ENCODE measurements at regions of chr3 and their contacts with region 1.

Region 1: GRCh38 chr3:101391413-101391950 is 71.1 kb upstream of the IMPG2 start:
- DNase-seq: no peak
- H3K4me3 Mint-ChIP-seq: no peak overlapping the region
- H3K27ac Mint-ChIP-seq: no peak overlapping the region
- H3K4me1 Mint-ChIP-seq: peaks cover 30% of the 10 kb centered on the region
- H3K27me3 Mint-ChIP-seq: no peaks in the 10 kb centered on the region

Region 2: DNA sequence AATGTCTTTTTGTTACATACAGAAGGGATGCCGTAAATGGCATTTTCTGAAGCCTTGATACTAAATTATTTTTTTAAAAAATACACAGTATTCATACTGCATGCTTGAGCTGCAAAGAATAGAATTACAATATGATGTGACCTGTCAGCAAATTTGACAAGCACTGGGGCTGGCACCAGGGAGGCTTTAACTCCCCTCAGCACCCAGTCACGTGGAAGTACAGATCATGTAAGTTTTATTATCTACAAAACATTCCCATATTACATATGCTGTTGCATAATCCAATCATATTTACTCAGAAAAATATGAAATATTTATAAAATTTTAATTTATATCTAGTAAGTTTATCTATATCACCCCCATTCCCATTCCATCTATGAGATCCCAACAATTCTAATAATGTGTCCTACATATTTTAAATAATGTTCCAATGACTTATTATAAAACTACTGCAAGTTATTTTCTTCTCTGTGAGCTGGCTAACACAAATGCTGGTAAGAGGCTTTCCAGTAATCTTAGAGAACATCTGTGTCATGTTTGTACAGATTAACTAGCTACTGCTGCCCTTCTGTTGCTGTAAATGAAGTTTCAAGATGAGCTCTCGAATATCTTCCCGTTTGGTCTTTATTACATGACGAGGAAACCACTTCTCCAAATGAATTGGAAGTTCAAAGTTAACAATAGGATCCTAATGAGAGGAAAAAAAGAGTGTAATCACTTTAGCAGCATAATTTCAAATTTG is 65.9 kb before region 1 on chr3:
- CTCF ChIA-PET with region 1: no interaction called
- intact Hi-C with region 1: no loop called
- DNase-seq: no peak
- H3K4me3 Mint-ChIP-seq: no peak overlapping the region
- H3K27ac Mint-ChIP-seq: no peak overlapping the region
- H3K4me1 Mint-ChIP-seq: peaks cover 2% of the 10 kb centered on the region
- H3K27me3 Mint-ChIP-seq: no peaks in the 10 kb centered on the region

Region 3: GRCh38 chr3:101466465-101467309 is 75.2 kb after region 1 on chr3:
- CTCF ChIA-PET with region 1: no interaction called
- intact Hi-C with region 1: loop called (anchors 2 kb)
- DNase-seq: peak; percentile 90
- H3K4me3 Mint-ChIP-seq: peak overlapping the region; percentile 71
- H3K27ac Mint-ChIP-seq: peak overlapping the region; percentile 88
- H3K4me1 Mint-ChIP-seq: peaks cover 57% of the 10 kb centered on the region
- H3K27me3 Mint-ChIP-seq: no peaks in the 10 kb centered on the region

Measured in activated naive CD4-positive, alpha-beta T cell treated with anti-CD3 and anti-CD28 coated beads for 36 hours (primary cell).